PC-9 (cell line): ENCODE measurements at regions of chr17 and their contacts with region 1.

Region 1: DNA sequence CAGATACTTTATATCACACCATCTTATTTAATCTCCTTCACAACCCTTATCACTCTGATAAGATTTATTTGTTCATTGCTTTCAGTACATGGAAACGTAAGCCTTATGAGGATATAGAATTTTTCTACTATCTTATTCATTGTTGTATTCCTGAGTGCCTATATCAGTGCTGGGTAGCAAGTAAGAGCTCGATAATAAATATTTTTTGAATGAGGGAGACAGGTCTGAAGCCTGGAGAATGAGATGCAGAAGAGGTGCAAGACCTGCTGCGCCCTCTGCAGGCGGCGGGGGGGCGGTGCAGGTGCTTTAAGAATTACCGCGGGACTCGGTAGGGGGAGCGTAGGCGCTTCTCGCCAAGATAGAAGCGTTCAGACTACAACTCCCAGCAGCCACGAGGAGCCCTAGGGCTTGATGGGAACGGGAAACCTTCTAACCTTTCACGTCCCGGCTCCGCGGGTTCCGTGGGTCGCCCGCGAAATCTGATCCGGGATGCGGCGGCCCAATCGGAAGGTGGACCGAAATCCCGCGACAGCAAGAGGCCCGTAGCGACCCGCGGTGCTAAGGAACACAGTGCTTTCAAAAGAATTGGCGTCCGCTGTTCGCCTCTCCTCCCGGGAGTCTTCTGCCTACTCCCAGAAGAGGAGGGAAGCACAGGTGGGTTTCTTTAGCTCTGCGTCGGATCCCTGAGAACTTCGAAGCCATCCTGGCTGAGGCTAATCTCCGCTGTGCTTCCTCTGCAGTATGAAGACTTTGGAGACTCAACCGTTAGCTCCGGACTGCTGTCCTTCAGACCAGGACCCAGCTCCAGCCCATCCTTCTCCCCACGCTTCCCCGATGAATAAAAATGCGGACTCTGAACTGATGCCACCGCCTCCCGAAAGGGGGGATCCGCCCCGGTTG is at the start of gene WRAP53:
- DNase-seq: peak; percentile 93 to 99
- H3K4me3 ChIP-seq: peak within 1 kb of the TSS; percentile 99
- H3K27ac ChIP-seq: peak within 1 kb of the TSS; percentile 96
- H3K4me1 ChIP-seq: peaks cover 10% of the 10 kb centered on the region
- H3K27me3 ChIP-seq: no peaks in the 10 kb centered on the region
- CTCF ChIP-seq: peak; percentile 90
- total RNA-seq, gene WRAP53: 31.9 and 37.2 TPM in 2 replicates

Region 2: DNA sequence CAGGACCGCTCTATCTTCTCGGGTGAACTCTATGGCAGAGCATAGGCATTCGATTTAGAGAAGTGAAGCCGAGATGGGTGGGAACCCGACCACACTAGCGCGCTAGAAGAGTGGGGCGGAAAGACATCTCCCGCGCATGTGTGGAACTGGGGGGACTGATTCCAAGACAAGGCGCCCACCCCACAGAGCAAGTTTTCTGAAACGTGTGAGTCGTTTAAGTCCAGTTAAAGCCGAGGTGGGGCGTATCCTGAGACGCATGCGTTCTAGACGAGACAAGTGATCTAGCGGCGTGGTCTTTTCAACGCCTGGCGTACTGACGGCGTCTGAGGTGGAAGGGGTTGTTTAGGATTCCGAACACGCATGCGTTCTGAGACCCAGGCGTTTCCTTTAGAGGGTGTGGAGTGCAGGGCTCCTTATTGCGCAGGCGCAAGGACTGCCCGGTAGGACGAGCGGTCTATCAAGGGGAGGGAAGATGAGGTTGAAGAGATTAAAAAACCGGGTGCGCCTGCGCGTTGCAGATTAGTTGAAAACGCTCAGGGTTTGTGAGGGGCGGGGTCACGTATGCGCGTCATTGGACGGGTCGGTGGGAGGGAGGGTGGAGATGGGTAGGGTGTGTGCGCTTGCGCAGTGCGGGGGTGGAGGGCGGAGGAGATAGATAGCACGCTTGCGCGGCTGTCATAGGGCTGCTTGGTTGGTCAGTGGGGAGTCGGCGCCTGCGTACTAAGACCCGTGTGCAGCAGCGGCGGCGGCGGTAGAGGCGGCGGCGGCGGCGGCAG is 381.1 kb before region 1 on chr17 and contains the start of gene EIF5A:
- CTCF ChIA-PET with region 1: no interaction called
- POLR2A ChIA-PET with region 1: no interaction called
- intact Hi-C with region 1: loop called (anchors 2 kb)
- DNase-seq: peak; percentile 99
- H3K4me3 ChIP-seq: peak within 1 kb of the TSS; percentile 86
- H3K27ac ChIP-seq: peak within 1 kb of the TSS; percentile 96
- H3K4me1 ChIP-seq: peaks cover 26% of the 10 kb centered on the region
- H3K27me3 ChIP-seq: no peaks in the 10 kb centered on the region
- CTCF ChIP-seq: no peak
- total RNA-seq, gene EIF5A: 806 and 1,298 TPM in 2 replicates

Region 3: GRCh38 chr17:7444682-7445618 is 243.2 kb before region 1 on chr17 and contains the start of gene CHRNB1:
- CTCF ChIA-PET with region 1: no interaction called
- POLR2A ChIA-PET with region 1: interaction called, 15 read pairs
- intact Hi-C with region 1: no loop called
- DNase-seq: peak; percentile 70 to 94
- H3K4me3 ChIP-seq: peak within 1 kb of the TSS; percentile 71
- H3K27ac ChIP-seq: peak within 1 kb of the TSS; percentile 75
- H3K4me1 ChIP-seq: peaks cover 12% of the 10 kb centered on the region
- H3K27me3 ChIP-seq: no peaks in the 10 kb centered on the region
- CTCF ChIP-seq: no peak
- total RNA-seq, gene CHRNB1: 31.9 and 53.4 TPM in 2 replicates

Region 4: GRCh38 chr17:7561028-7561575 is 127.1 kb before region 1 on chr17:
- CTCF ChIA-PET with region 1: interaction called, 12 read pairs
- POLR2A ChIA-PET with region 1: no interaction called
- intact Hi-C with region 1: no loop called
- DNase-seq: peak; percentile 62 to 93
- H3K4me3 ChIP-seq: peak overlapping the region; percentile 92
- H3K27ac ChIP-seq: peak overlapping the region; percentile 60
- H3K4me1 ChIP-seq: peaks cover 9% of the 10 kb centered on the region
- H3K27me3 ChIP-seq: no peaks in the 10 kb centered on the region
- CTCF ChIP-seq: peak; percentile 69

Region 5: GRCh38 chr17:7614422-7615264 is 73.5 kb before region 1 on chr17 and contains the start of gene FXR2:
- CTCF ChIA-PET with region 1: interaction called, 9 read pairs
- POLR2A ChIA-PET with region 1: interaction called, 13 read pairs
- intact Hi-C with region 1: loop called (anchors 1 kb)
- DNase-seq: peak; percentile 94 to 100
- H3K4me3 ChIP-seq: peak within 1 kb of the TSS; percentile 89
- H3K27ac ChIP-seq: peak within 1 kb of the TSS; percentile 73
- H3K4me1 ChIP-seq: peaks cover 22% of the 10 kb centered on the region
- H3K27me3 ChIP-seq: no peaks in the 10 kb centered on the region
- CTCF ChIP-seq: peak; percentile 54; the same call in 1 of the 2 replicates
- total RNA-seq, gene FXR2: 61.5 and 63.7 TPM in 2 replicates

Region 6: GRCh38 chr17:7640783-7641182 is 47.4 kb before region 1 on chr17:
- CTCF ChIA-PET with region 1: no interaction called
- POLR2A ChIA-PET with region 1: no interaction called
- intact Hi-C with region 1: no loop called
- DNase-seq: no peak
- H3K4me3 ChIP-seq: no peak overlapping the region
- H3K27ac ChIP-seq: no peak overlapping the region
- H3K4me1 ChIP-seq: no peaks in the 10 kb centered on the region
- H3K27me3 ChIP-seq: no peaks in the 10 kb centered on the region
- CTCF ChIP-seq: no peak

Region 7: DNA sequence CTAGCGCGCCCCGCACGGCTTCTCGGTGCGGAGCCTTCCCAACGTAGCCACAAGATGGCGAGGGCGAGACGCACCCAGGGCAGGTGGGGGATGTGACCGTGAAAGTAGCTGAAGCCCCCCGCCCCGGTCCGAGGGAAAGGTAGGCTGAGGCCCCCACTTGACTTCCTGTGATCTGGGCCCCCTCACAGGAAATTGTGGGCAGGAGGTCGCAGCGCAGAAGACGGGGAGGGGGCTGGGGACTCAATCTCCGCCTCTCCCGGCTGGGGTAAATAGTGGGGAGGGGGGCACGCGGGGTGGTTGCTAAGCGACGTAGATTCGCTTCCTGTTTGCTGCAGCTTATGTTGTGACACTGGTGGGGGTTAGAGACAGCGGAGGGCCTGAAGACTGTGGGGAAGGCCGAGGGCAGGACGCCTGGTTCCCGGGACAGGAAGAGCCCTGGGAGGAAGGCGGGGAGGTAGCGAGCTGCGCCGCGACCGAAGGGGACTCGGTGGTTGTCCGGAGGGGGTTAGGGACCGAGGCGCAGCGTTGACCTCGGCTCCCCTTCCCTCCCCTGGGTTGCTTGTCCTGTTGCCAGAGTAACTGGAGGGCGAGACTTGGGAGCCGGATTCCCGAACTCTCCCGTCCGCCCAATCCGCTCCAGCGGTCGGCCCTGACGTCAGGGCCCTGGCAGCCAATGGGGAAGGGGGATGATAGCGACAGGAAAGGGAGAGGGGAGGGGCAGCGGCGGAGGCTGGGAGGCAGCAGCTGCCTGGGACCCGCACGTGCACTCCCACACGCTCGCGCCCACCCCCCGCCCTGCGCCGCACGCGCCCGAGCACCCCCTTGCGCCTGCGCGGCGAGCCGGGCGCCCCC is 147.0 kb after region 1 on chr17:
- CTCF ChIA-PET with region 1: no interaction called
- POLR2A ChIA-PET with region 1: no interaction called
- intact Hi-C with region 1: loop called (anchors 5 kb)
- DNase-seq: peak; percentile 84 to 96
- H3K4me3 ChIP-seq: peak overlapping the region; percentile 82
- H3K27ac ChIP-seq: 0 out of 2 replicates have a peak overlapping the region, but pooled peaks have one; percentile 23
- H3K4me1 ChIP-seq: peaks cover 18% of the 10 kb centered on the region
- H3K27me3 ChIP-seq: no peaks in the 10 kb centered on the region
- CTCF ChIP-seq: peak; percentile 63; the same call in 1 of the 2 replicates